B cell (primary cell): ENCODE measurements at regions of chr5 and their contacts with region 1.

Region 1: DNA sequence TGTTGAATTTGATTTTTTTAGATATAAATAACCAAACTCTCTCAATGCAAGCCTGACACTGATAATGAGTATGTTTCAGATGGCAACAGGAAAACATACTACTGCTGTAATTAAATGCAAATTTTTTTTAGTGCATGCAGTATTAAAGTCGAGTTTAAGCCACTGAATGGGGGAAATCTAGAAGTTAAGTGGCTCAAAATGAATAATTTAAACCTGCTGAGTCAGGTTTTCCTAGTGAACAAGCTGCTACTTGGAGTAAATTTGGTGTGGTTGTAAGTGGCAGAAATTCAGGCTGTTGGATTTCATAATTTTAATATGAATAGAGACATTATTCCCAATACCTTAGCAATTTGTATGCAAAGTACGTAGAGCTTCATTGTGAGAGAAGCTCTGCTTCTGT is 121.8 kb downstream of the SLF1 start:
- DNase-seq: no peak
- ATAC-seq: no peak
- H3K4me3 ChIP-seq: no peak overlapping the region
- H3K4me3 Mint-ChIP-seq: no peak overlapping the region
- H3K27ac ChIP-seq: no peak overlapping the region
- H3K27ac Mint-ChIP-seq: no peak overlapping the region
- H3K4me1 ChIP-seq: peaks cover 0 to 6% of the 10 kb centered on the region in 2 donors
- H3K4me1 Mint-ChIP-seq: peaks cover 7% of the 10 kb centered on the region
- H3K27me3 ChIP-seq: no peaks in the 10 kb centered on the region
- H3K27me3 Mint-ChIP-seq: no peaks in the 10 kb centered on the region
- CTCF ChIP-seq: no peak

Region 2: GRCh38 chr5:94376672-94377345 is 363.5 kb before region 1 on chr5:
- CTCF ChIA-PET with region 1: no interaction called
- POLR2A ChIA-PET with region 1: no interaction called
- intact Hi-C with region 1: no loop called
- DNase-seq: no peak
- ATAC-seq: no peak
- H3K4me3 ChIP-seq: no peak overlapping the region
- H3K4me3 Mint-ChIP-seq: no peak overlapping the region
- H3K27ac ChIP-seq: no peak overlapping the region
- H3K27ac Mint-ChIP-seq: no peak overlapping the region
- H3K4me1 ChIP-seq: no peaks in the 10 kb centered on the region
- H3K4me1 Mint-ChIP-seq: no peaks in the 10 kb centered on the region
- H3K27me3 ChIP-seq: no peaks in the 10 kb centered on the region
- H3K27me3 Mint-ChIP-seq: no peaks in the 10 kb centered on the region
- CTCF ChIP-seq: no peak

Region 3: DNA sequence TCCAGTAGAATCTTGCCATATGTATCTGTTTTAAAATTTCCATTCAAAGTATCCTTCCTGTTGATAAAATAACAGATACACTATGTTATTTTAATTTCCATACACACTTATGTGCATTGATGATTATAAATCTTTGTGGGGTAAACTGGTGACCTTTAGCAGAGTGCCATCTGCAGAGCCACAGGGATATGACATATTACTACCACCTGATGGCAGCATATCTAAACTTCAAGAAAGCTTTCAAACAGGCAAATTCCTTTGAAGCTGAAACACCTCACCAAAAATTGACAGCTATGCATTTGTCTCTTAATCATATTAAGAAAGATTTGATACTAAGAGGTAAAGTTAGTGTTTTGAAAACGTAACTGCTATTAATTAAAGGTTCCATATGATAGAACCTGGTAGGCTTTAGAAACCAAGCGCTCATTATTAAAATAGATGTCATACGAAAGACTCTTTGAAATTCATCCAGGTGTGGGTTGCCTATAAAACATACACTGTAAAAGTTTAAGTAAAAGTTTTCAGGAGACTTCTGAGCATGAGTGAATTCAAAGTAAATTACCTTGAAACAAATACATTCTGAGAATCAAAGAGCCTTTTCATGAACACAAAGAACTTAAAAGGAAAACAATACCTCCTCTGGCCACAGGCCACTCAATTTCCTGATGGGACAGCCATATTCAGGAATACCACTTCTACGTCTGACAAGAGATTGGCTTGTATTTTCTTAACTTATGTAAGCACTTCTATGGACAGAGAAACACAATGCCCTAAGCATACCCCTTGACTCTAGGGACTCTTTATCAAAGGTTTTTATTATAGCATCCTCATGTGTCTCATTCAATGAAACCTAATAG is 215.2 kb before region 1 on chr5:
- CTCF ChIA-PET with region 1: interaction called, 62 read pairs
- POLR2A ChIA-PET with region 1: no interaction called
- intact Hi-C with region 1: loop called (anchors 1 kb)
- DNase-seq: peak; percentile 49
- ATAC-seq: peak; percentile 49
- H3K4me3 ChIP-seq: no peak overlapping the region
- H3K4me3 Mint-ChIP-seq: no peak overlapping the region
- H3K27ac ChIP-seq: no peak overlapping the region
- H3K27ac Mint-ChIP-seq: no peak overlapping the region
- H3K4me1 ChIP-seq: no peaks in the 10 kb centered on the region
- H3K4me1 Mint-ChIP-seq: no peaks in the 10 kb centered on the region
- H3K27me3 ChIP-seq: no peaks in the 10 kb centered on the region
- H3K27me3 Mint-ChIP-seq: no peaks in the 10 kb centered on the region
- CTCF ChIP-seq: peak; percentile 68

Region 4: DNA sequence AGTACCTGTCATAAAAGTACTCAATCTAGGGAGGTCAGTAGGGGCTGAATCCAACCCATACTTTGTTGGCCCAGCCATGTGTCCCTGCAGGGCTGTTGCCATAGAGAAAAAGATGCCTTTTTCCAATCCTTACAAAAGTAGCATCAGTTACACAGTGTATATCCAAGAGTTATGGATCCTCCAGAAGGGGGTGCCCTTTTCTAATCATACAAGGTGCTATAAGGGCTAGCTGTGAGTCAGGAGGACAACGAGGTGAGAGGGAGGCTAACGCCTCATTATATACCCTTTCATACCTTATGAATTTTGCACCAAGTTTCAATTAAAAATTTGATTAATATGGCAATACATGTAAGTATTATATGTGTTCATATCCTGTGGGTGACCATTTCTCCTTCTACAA is 126.7 kb before region 1 on chr5:
- CTCF ChIA-PET with region 1: interaction called, 26 read pairs
- POLR2A ChIA-PET with region 1: no interaction called
- intact Hi-C with region 1: loop called (anchors 1 kb)
- DNase-seq: peak; percentile 35
- ATAC-seq: no peak
- H3K4me3 ChIP-seq: no peak overlapping the region
- H3K4me3 Mint-ChIP-seq: no peak overlapping the region
- H3K27ac ChIP-seq: no peak overlapping the region
- H3K27ac Mint-ChIP-seq: no peak overlapping the region
- H3K4me1 ChIP-seq: peaks cover 7 to 8% of the 10 kb centered on the region in 2 donors
- H3K4me1 Mint-ChIP-seq: peaks cover 11% of the 10 kb centered on the region
- H3K27me3 ChIP-seq: no peaks in the 10 kb centered on the region
- H3K27me3 Mint-ChIP-seq: no peaks in the 10 kb centered on the region
- CTCF ChIP-seq: no peak

Region 5: DNA sequence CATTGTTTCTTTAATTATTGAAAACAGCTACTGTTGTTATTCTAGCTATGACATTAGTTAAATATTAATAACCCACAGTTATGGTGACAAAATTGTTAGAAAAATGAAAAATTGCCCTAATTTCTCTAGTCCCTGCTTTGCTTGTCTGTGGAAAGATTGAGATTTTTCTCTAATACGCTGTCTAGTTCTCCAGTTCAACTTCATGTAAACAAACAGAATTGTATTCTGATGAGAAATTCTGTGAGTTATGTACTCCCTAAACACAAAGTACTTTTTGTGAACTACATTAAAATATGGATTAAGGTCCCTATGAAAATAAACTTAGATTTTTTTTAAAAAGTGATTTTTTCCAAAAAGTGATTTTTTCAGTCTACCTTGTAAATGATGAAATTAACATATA is 113.1 kb before region 1 on chr5:
- CTCF ChIA-PET with region 1: no interaction called
- POLR2A ChIA-PET with region 1: no interaction called
- intact Hi-C with region 1: no loop called
- DNase-seq: no peak
- ATAC-seq: no peak
- H3K4me3 ChIP-seq: no peak overlapping the region
- H3K4me3 Mint-ChIP-seq: no peak overlapping the region
- H3K27ac ChIP-seq: no peak overlapping the region
- H3K27ac Mint-ChIP-seq: no peak overlapping the region
- H3K4me1 ChIP-seq: peaks cover 7 to 10% of the 10 kb centered on the region in 2 donors
- H3K4me1 Mint-ChIP-seq: peaks cover 14% of the 10 kb centered on the region
- H3K27me3 ChIP-seq: no peaks in the 10 kb centered on the region
- H3K27me3 Mint-ChIP-seq: no peaks in the 10 kb centered on the region
- CTCF ChIP-seq: no peak

Region 6: GRCh38 chr5:94670726-94671125 is 69.6 kb before region 1 on chr5:
- CTCF ChIA-PET with region 1: no interaction called
- POLR2A ChIA-PET with region 1: no interaction called
- intact Hi-C with region 1: no loop called
- DNase-seq: no peak
- ATAC-seq: no peak
- H3K4me3 ChIP-seq: no peak overlapping the region
- H3K4me3 Mint-ChIP-seq: no peak overlapping the region
- H3K27ac ChIP-seq: no peak overlapping the region
- H3K27ac Mint-ChIP-seq: no peak overlapping the region
- H3K4me1 ChIP-seq: no peaks in the 10 kb centered on the region
- H3K4me1 Mint-ChIP-seq: peaks cover 3% of the 10 kb centered on the region
- H3K27me3 ChIP-seq: no peaks in the 10 kb centered on the region
- H3K27me3 Mint-ChIP-seq: no peaks in the 10 kb centered on the region
- CTCF ChIP-seq: no peak

Region 7: GRCh38 chr5:94725142-94725541 is 15.1 kb before region 1 on chr5:
- CTCF ChIA-PET with region 1: interaction called, 10 read pairs
- POLR2A ChIA-PET with region 1: no interaction called
- intact Hi-C with region 1: no loop called
- DNase-seq: no peak
- ATAC-seq: no peak
- H3K4me3 ChIP-seq: no peak overlapping the region
- H3K4me3 Mint-ChIP-seq: no peak overlapping the region
- H3K27ac ChIP-seq: no peak overlapping the region
- H3K27ac Mint-ChIP-seq: no peak overlapping the region
- H3K4me1 ChIP-seq: no peaks in the 10 kb centered on the region
- H3K4me1 Mint-ChIP-seq: no peaks in the 10 kb centered on the region
- H3K27me3 ChIP-seq: no peaks in the 10 kb centered on the region
- H3K27me3 Mint-ChIP-seq: no peaks in the 10 kb centered on the region
- CTCF ChIP-seq: no peak

Region 8: DNA sequence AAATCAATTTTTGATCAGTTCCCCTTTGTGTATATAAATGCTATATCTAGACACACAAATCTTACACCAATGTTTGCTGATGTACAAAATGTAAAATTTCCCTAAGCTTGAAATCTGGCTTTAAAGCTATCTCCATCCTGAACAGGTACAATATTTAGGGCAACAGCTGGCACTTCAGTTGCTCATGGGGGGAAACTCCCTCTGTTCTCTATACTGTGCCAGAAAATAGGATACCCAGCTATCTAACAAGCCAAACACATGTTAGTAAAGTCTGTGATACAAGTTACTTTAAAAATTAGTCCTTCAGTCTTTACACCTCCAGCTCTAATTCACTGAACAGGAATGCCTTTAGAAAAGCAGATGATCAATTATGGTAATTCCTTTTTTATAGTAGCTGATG is 70.0 kb after region 1 on chr5:
- CTCF ChIA-PET with region 1: interaction called, 10 read pairs
- POLR2A ChIA-PET with region 1: no interaction called
- intact Hi-C with region 1: no loop called
- DNase-seq: no peak
- ATAC-seq: no peak
- H3K4me3 ChIP-seq: no peak overlapping the region
- H3K4me3 Mint-ChIP-seq: no peak overlapping the region
- H3K27ac ChIP-seq: no peak overlapping the region
- H3K27ac Mint-ChIP-seq: no peak overlapping the region
- H3K4me1 ChIP-seq: no peaks in the 10 kb centered on the region
- H3K4me1 Mint-ChIP-seq: no peaks in the 10 kb centered on the region
- H3K27me3 ChIP-seq: no peaks in the 10 kb centered on the region
- H3K27me3 Mint-ChIP-seq: peaks cover 4% of the 10 kb centered on the region
- CTCF ChIP-seq: no peak